ENCODE measurements at regions of chr17 and their contacts with region 1.

Region 1: DNA sequence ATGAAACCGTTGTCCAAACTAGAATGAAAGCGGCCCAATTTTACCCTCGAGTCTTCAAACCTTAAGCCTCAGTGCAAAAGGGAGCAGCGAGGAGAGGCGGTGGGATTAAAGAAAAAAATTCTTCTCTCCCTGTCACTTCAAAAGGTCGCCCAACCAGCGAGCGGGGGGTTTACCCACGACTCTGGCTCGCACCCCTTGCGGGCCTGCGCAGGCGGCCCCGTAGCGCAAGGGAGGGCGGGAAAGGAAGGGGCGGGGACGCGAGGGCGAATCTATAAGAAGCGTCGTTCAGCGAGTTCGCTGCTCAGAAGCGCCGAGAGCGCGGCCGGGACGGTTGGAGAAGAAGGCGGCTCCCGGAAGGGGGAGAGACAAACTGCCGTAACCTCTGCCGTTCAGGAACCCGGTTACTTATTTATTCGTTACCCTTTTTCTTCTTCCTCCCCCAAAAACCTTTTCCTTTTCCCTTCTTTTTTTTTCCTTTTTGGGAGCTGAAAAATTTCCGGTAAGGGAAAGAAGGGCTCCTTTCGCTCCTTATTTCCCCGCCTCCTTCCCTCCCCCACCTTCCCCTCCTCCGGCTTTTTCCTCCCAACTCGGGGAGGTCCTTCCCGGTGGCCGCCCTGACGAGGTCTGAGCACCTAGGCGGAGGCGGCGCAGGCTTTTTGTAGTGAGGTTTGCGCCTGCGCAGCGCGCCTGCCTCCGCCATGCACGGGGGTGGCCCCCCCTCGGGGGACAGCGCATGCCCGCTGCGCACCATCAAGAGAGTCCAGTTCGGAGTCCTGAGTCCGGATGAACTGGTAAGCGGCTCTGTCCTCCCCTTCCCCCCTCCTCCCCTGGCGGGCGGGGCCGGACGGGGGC is at the start of gene POLR2A:
- DNase-seq: peak; percentile 97 to 99 (median 99)
- H3K4me3 ChIP-seq: peak within 1 kb of the TSS; percentile 92 to 95
- H3K4me3 Mint-ChIP-seq: peak within 1 kb of the TSS; percentile 96 to 100 (median 98)
- H3K27ac ChIP-seq: peak within 1 kb of the TSS; percentile 99
- H3K27ac Mint-ChIP-seq: peak within 1 kb of the TSS; percentile 99 to 100 (median 100)
- H3K4me1 ChIP-seq: peaks cover 59% of the 10 kb centered on the region
- H3K4me1 Mint-ChIP-seq: peaks cover 47 to 89% (median 65%) of the 10 kb centered on the region in 4 donors
- H3K27me3 ChIP-seq: no peaks in the 10 kb centered on the region
- H3K27me3 Mint-ChIP-seq: no peaks in the 10 kb centered on the region
- total RNA-seq, gene POLR2A: 178 to 191 TPM

Region 2: GRCh38 chr17:6843241-6843880 is 640.9 kb before region 1 on chr17:
- CTCF ChIA-PET with region 1: no interaction called
- POLR2A ChIA-PET with region 1: no interaction called
- intact Hi-C with region 1: no loop called
- DNase-seq: peak in 4 of 5 donors; percentile 37 to 45 (median 38)
- H3K4me3 ChIP-seq: no peak overlapping the region
- H3K4me3 Mint-ChIP-seq: no peak overlapping the region
- H3K27ac ChIP-seq: no peak overlapping the region
- H3K27ac Mint-ChIP-seq: no peak overlapping the region
- H3K4me1 ChIP-seq: peaks cover 10% of the 10 kb centered on the region
- H3K4me1 Mint-ChIP-seq: peaks cover 0 to 6% (median 5%) of the 10 kb centered on the region in 4 donors
- H3K27me3 ChIP-seq: no peaks in the 10 kb centered on the region
- H3K27me3 Mint-ChIP-seq: peaks cover 16 to 31% of the 10 kb centered on the region in 2 donors

Region 3: GRCh38 chr17:7239091-7240027 is 244.9 kb before region 1 on chr17 and contains the start of gene PHF23:
- CTCF ChIA-PET with region 1: interaction called, 5 read pairs
- POLR2A ChIA-PET with region 1: interaction called, 14 read pairs
- intact Hi-C with region 1: loop called (anchors 1 kb)
- DNase-seq: peak; percentile 97 to 98 (median 98)
- H3K4me3 ChIP-seq: peak within 1 kb of the TSS; percentile 85 to 86
- H3K4me3 Mint-ChIP-seq: peak within 1 kb of the TSS; percentile 94 to 99 (median 96)
- H3K27ac ChIP-seq: peak within 1 kb of the TSS; percentile 85
- H3K27ac Mint-ChIP-seq: peak within 1 kb of the TSS; percentile 90 to 100 (median 98)
- H3K4me1 ChIP-seq: peaks cover 61% of the 10 kb centered on the region
- H3K4me1 Mint-ChIP-seq: peaks cover 41 to 75% (median 54%) of the 10 kb centered on the region in 4 donors
- H3K27me3 ChIP-seq: no peaks in the 10 kb centered on the region
- H3K27me3 Mint-ChIP-seq: peaks cover 0 to 2% of the 10 kb centered on the region in 2 donors
- total RNA-seq, gene PHF23: 45.8 to 55.8 TPM

Region 4: DNA sequence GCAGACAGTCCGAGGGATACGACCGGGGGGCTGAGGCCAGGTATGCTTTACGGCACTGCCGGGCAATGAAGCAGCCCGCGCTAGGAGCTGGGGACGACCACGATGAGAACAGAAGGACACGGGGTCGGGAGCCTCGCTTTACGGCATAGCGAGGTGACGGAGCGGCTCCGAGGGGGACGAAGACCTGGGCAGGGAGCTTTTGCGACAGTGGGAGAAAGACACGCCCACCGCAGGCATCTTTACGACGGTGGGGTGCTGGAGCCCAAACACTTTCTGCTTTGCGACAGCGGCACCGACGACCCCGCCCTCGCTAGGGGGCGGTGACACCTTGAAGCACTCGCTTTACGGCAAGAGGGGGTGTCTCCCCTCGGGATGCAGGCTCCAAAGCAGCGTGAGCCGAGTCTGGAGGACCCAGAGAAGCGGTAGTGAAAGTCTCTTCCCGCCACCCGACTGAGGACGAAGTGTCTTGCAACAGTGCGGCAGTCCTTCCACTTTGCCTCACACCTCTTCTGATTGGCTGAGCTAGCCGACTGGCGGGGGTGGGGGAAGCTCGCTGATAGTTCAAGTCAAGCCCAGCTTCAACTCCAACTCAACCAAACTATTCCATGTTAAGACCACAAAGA is 154.8 kb before region 1 on chr17:
- CTCF ChIA-PET with region 1: no interaction called
- POLR2A ChIA-PET with region 1: interaction called, 9 read pairs
- intact Hi-C with region 1: loop called (anchors 1 kb)
- DNase-seq: peak; percentile 97 to 99 (median 97)
- H3K4me3 ChIP-seq: peak overlapping the region; percentile 94 to 99
- H3K4me3 Mint-ChIP-seq: peak overlapping the region; percentile 97 to 98 (median 98)
- H3K27ac ChIP-seq: peak overlapping the region; percentile 82
- H3K27ac Mint-ChIP-seq: peak overlapping the region; percentile 93 to 99 (median 98)
- H3K4me1 ChIP-seq: peaks cover 49% of the 10 kb centered on the region
- H3K4me1 Mint-ChIP-seq: peaks cover 32 to 58% (median 42%) of the 10 kb centered on the region in 4 donors
- H3K27me3 ChIP-seq: no peaks in the 10 kb centered on the region
- H3K27me3 Mint-ChIP-seq: no peaks in the 10 kb centered on the region

Region 5: GRCh38 chr17:7403977-7404736 is 80.1 kb before region 1 on chr17 and contains the start of gene TMEM256:
- CTCF ChIA-PET with region 1: no interaction called
- POLR2A ChIA-PET with region 1: interaction called, 35 read pairs
- intact Hi-C with region 1: loop called (anchors 1 kb)
- DNase-seq: peak; percentile 91 to 98 (median 94)
- H3K4me3 ChIP-seq: peak within 1 kb of the TSS; percentile 73 to 77
- H3K4me3 Mint-ChIP-seq: peak within 1 kb of the TSS; percentile 93 to 98 (median 97)
- H3K27ac ChIP-seq: peak within 1 kb of the TSS; percentile 51
- H3K27ac Mint-ChIP-seq: peak within 1 kb of the TSS; percentile 89 to 99 (median 98)
- H3K4me1 ChIP-seq: peaks cover 17% of the 10 kb centered on the region
- H3K4me1 Mint-ChIP-seq: peaks cover 16 to 40% (median 18%) of the 10 kb centered on the region in 4 donors
- H3K27me3 ChIP-seq: no peaks in the 10 kb centered on the region
- H3K27me3 Mint-ChIP-seq: peaks cover 2% of the 10 kb centered on the region in 2 donors
- total RNA-seq, gene TMEM256: 35.4 to 38.3 TPM

Region 6: GRCh38 chr17:7496470-7497183 is 12.3 kb after region 1 on chr17:
- CTCF ChIA-PET with region 1: interaction called, 4 read pairs
- POLR2A ChIA-PET with region 1: interaction called, 22 read pairs
- intact Hi-C with region 1: no loop called
- DNase-seq: no peak
- H3K4me3 ChIP-seq: no peak overlapping the region
- H3K4me3 Mint-ChIP-seq: no peak overlapping the region
- H3K27ac ChIP-seq: no peak overlapping the region
- H3K27ac Mint-ChIP-seq: peak overlapping the region in 4 of 7 donors; percentile 36 to 70 (median 49)
- H3K4me1 ChIP-seq: peaks cover 17% of the 10 kb centered on the region
- H3K4me1 Mint-ChIP-seq: peaks cover 22 to 32% (median 26%) of the 10 kb centered on the region in 4 donors
- H3K27me3 ChIP-seq: no peaks in the 10 kb centered on the region
- H3K27me3 Mint-ChIP-seq: no peaks in the 10 kb centered on the region

Region 7: DNA sequence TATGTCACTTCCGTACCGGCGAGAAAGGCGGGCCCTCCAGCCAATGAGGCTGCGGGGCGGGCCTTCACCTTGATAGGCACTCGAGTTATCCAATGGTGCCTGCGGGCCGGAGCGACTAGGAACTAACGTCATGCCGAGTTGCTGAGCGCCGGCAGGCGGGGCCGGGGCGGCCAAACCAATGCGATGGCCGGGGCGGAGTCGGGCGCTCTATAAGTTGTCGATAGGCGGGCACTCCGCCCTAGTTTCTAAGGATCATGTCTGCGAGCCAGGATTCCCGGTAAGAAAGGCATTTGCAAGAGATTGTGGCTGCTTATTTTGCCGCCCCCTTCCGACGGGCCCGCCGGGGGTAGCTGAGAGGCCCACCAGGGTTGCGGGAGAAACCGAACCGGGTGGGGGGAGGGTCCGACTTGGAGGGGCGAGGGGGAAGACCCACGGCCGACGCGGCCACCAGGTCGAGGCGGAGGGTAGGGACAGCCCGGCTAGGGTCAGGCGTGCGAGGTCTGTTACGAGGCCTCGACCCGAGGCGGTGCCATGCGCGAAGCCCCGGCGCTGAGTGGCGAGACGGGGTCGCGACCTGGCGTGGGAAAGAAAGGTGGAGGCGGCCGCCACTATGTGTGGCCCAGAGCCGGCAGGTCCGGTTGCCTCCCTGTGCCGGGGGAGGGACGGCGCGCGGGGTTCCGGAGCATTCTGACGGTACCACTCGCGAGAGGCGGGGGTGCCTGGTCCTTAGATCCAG is 88.5 kb after region 1 on chr17:
- CTCF ChIA-PET with region 1: no interaction called
- POLR2A ChIA-PET with region 1: interaction called, 48 read pairs
- intact Hi-C with region 1: loop called (anchors 1 kb)
- DNase-seq: peak; percentile 100
- H3K4me3 ChIP-seq: peak overlapping the region; percentile 57 to 93
- H3K4me3 Mint-ChIP-seq: peak overlapping the region; percentile 94 to 100 (median 98)
- H3K27ac ChIP-seq: peak overlapping the region; percentile 97
- H3K27ac Mint-ChIP-seq: peak overlapping the region; percentile 98 to 100 (median 99)
- H3K4me1 ChIP-seq: peaks cover 44% of the 10 kb centered on the region
- H3K4me1 Mint-ChIP-seq: peaks cover 25 to 62% (median 41%) of the 10 kb centered on the region in 4 donors
- H3K27me3 ChIP-seq: no peaks in the 10 kb centered on the region
- H3K27me3 Mint-ChIP-seq: no peaks in the 10 kb centered on the region

Region 8: DNA sequence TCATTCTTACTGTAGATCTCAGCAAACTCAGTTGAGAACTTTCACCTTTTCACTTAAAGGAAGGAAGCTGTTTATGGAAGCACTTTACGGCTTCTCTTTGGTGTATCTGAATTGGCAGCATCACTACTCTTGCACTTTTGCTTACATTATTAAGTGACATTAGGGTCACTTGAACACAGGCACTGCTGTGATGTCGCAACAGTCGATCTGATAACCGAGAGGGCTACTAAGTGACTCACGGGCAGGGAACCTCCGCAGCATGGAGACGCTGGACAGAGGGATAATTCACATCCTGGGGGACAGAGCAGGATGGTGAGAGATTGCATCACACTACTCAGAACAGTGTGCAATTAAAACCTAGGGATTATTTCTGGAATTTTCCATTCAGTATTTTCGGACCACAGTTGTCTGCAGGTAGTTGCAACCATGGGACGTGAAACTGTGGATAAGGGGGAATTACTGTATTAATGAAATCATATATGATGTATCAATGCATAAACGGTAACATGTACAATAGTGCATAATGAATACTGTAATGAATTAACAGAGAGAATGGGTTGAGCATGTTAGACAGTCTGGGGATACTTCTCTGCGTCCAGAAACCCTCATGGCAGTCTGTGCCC is 289.9 kb after region 1 on chr17:
- CTCF ChIA-PET with region 1: no interaction called
- POLR2A ChIA-PET with region 1: no interaction called
- intact Hi-C with region 1: no loop called
- DNase-seq: no peak
- H3K4me3 ChIP-seq: no peak overlapping the region
- H3K4me3 Mint-ChIP-seq: no peak overlapping the region
- H3K27ac ChIP-seq: no peak overlapping the region
- H3K27ac Mint-ChIP-seq: peak overlapping the region in 1 of 7 donors; percentile 20
- H3K4me1 ChIP-seq: no peaks in the 10 kb centered on the region
- H3K4me1 Mint-ChIP-seq: peaks cover 0 to 1% (median 0%) of the 10 kb centered on the region in 4 donors
- H3K27me3 ChIP-seq: peaks cover 2% of the 10 kb centered on the region
- H3K27me3 Mint-ChIP-seq: peaks cover 30 to 43% of the 10 kb centered on the region in 2 donors

Measured in CD4-positive, alpha-beta memory T cell (primary cell).